Panc1 (cell line): ENCODE measurements at regions of chr3 and their contacts with region 1.

Region 1: GRCh38 chr3:63960048-63960711 is 48.0 kb upstream of the SCAANT1 start:
- DNase-seq: peak; percentile 67
- ATAC-seq: peak; percentile 97
- H3K4me3 ChIP-seq: peak overlapping the region; percentile 23 to 55
- H3K27ac ChIP-seq: peak overlapping the region; percentile 78
- H3K4me1 ChIP-seq: peaks cover 7% of the 10 kb centered on the region
- H3K27me3 ChIP-seq: no peaks in the 10 kb centered on the region
- CTCF ChIP-seq: no peak

Region 2: DNA sequence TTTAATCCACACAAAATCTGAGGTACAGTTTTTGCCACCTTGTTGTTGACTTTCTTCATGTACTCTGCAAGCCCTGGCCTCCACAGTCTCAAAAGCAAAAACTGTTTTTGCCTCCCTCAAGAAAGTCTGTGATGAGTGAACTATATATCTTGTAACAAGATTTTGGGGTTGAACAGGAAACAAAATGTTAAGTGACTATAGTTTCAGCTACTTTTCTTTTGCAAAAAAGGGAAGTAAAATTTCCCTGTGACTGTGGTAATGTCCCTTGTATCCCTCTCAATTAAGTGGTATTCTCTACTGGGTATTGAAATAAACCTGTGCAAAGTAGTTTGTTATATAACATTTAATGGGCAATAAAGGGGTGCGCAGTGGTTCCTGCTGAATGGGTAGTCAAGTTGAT is 26.7 kb before region 1 on chr3:
- CTCF ChIA-PET with region 1: interaction called, 13 read pairs
- POLR2A ChIA-PET with region 1: no interaction called
- in situ Hi-C with region 1: no loop called
- intact Hi-C with region 1: no loop called
- DNase-seq: no peak
- ATAC-seq: no peak
- H3K4me3 ChIP-seq: no peak overlapping the region
- H3K27ac ChIP-seq: no peak overlapping the region
- H3K4me1 ChIP-seq: no peaks in the 10 kb centered on the region; the same call in 1 of the 2 replicates
- H3K27me3 ChIP-seq: no peaks in the 10 kb centered on the region
- CTCF ChIP-seq: no peak

Region 3: GRCh38 chr3:64300790-64301423 is 340.7 kb after region 1 on chr3:
- CTCF ChIA-PET with region 1: interaction called, 10 read pairs
- POLR2A ChIA-PET with region 1: no interaction called
- in situ Hi-C with region 1: no loop called
- intact Hi-C with region 1: no loop called
- DNase-seq: no peak
- ATAC-seq: no peak
- H3K4me3 ChIP-seq: no peak overlapping the region
- H3K27ac ChIP-seq: no peak overlapping the region
- H3K4me1 ChIP-seq: no peaks in the 10 kb centered on the region
- H3K27me3 ChIP-seq: no peaks in the 10 kb centered on the region
- CTCF ChIP-seq: no peak

Region 4: DNA sequence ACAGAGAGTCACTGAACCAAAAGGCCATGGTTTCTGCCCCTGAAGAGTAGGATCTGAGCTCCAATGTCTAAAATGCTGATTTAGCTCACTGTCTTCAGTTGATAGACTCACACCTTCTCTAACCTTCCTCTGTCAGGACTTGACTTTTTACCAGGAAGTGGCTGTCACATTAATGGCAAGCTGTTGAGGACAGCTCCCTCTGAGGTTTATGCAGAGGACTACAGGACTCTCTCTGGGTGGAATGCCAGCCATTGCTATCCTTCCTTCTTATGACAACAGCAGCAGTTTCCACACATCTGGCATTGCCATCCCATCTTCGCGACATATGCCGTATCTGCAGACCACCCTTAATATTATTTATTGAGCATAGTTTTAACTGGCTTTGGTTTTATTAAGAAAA is 368.9 kb after region 1 on chr3:
- CTCF ChIA-PET with region 1: interaction called, 15 read pairs
- POLR2A ChIA-PET with region 1: no interaction called
- in situ Hi-C with region 1: no loop called
- intact Hi-C with region 1: no loop called
- DNase-seq: no peak
- ATAC-seq: no peak
- H3K4me3 ChIP-seq: no peak overlapping the region
- H3K27ac ChIP-seq: no peak overlapping the region
- H3K4me1 ChIP-seq: no peaks in the 10 kb centered on the region
- H3K27me3 ChIP-seq: no peaks in the 10 kb centered on the region; the same call in 1 of the 2 replicates
- CTCF ChIP-seq: no peak